ENCODE measurements at regions of chr2 and their contacts with region 1.

Region 1: DNA sequence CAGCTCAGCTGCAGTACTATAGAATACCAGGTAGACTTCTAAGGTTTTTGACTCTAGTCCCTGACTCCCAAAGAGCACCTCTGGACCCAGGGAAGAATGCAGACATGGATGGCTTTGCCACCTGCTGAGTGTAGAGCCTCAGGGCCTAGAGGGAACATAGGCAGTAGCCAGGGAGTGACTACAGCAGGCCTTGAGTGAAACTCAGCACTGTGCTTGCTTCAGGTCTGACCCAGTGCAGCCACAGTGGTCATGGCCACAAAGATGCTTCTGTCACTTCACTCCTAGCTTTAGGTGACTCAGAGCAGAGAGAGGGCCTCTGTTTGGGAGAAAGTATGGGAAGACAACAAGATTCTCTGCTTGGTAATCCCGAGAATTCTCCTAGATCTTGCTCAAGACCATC is 162.2 kb upstream of the ITGA4 start:
- DNase-seq: no peak
- CTCF ChIP-seq: no peak

Region 2: GRCh38 chr2:181305301-181306123 is 10.5 kb after region 1 on chr2:
- CTCF ChIA-PET with region 1: interaction called, 12 read pairs
- POLR2A ChIA-PET with region 1: no interaction called
- DNase-seq: peak; percentile 45
- CTCF ChIP-seq: no peak